Breast epithelium (tissue), 4 donors: ENCODE measurements at regions of chr2 and their contacts with region 1.

Region 1: DNA sequence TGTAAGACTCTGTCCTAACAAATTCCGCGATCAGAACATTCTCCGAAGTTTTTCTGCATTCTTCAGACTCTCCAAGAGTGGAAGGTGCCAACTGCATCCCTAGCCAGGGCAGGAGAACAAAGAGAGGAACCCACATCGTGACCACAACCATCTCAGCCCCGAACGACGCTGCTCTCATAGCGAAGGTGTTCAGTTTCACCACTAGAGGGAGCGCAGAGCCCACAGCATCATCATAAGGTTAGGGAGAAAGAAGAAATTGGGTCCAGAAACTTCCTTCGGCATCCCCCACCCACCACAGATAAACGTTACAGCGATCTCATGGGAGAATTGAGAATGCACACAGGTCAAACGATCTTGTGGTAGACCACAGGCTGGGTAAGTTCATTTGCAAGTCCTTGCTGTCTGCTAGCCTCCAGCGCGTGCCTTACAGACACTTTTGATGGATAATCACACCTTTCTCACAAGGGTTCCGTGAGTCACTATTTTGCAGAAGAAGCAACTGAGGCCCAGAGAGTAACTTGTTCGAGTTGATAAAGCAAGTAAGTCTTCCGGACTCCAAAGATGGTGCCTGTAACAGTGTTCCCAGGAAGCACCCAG is 53.7 kb upstream of the ARL4C start:
- DNase-seq: peak in 1 of 2 donors; percentile 88
- H3K4me3 ChIP-seq: no peak overlapping the region
- H3K27ac ChIP-seq: no peak overlapping the region
- H3K4me1 ChIP-seq: no peaks in the 10 kb centered on the region
- H3K27me3 ChIP-seq: no peaks in the 10 kb centered on the region
- CTCF ChIP-seq: peak; percentile 92 to 98 (median 96)
- POLR2A ChIP-seq: no peak

Region 2: GRCh38 chr2:234533626-234534025 is 17.0 kb before region 1 on chr2:
- intact Hi-C with region 1: no loop called
- DNase-seq: no peak
- H3K4me3 ChIP-seq: no peak overlapping the region
- H3K27ac ChIP-seq: no peak overlapping the region
- H3K4me1 ChIP-seq: no peaks in the 10 kb centered on the region
- H3K27me3 ChIP-seq: no peaks in the 10 kb centered on the region
- CTCF ChIP-seq: no peak
- POLR2A ChIP-seq: no peak

Region 3: DNA sequence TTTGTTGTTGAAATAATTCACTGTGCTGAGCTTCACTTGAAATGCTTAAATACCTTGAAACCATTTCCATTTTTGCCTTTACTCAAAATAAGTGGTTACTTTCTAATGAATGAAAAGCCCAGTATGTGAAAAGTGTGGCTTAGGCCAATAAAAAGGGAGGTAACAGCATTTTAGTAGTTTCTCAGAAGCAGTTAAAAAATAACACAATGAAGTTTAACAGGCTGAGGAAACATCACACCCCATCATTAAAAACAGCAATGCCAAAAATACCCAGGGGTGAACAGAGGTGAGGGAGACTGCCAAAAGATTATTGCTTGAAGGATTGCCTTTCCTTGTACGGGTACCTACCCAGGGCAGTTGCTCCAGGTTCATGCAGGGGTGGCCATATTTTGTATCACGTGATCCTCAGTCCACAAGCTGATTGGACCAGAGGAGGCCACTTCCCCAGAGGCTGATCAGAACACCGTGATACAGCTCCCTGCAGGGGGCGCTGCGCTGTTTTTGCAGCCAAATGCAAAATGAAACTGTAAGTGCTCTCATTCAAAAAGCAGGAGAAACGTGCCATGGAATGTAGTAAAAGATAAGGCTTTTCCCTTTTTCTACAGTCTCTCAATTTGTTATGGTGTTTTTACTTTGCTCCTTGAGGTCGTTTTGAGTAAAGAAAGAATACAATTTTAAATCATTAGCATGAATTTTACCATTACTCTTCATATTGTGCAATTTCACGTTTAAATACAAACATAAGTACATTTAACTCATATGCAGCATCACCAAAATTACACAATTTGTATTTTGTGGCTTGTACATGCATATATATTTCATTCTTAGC is 331.0 kb after region 1 on chr2:
- intact Hi-C with region 1: no loop called
- DNase-seq: peak; percentile 70 to 72
- H3K4me3 ChIP-seq: peak overlapping the region in 1 of 3 donors; percentile 9
- H3K27ac ChIP-seq: no peak overlapping the region
- H3K4me1 ChIP-seq: no peaks in the 10 kb centered on the region
- H3K27me3 ChIP-seq: no peaks in the 10 kb centered on the region
- CTCF ChIP-seq: peak in 2 of 3 donors; percentile 60 to 63
- POLR2A ChIP-seq: no peak

Region 4: GRCh38 chr2:235106874-235107639 is 556.4 kb after region 1 on chr2:
- intact Hi-C with region 1: loop called (anchors 10 kb)
- DNase-seq: peak; percentile 54 to 70
- H3K4me3 ChIP-seq: no peak overlapping the region
- H3K27ac ChIP-seq: no peak overlapping the region
- H3K4me1 ChIP-seq: no peaks in the 10 kb centered on the region
- H3K27me3 ChIP-seq: no peaks in the 10 kb centered on the region
- CTCF ChIP-seq: peak; percentile 22 to 75 (median 74)
- POLR2A ChIP-seq: no peak